Endothelial cell of umbilical vein (primary cell): ENCODE measurements at regions of chr10 and their contacts with region 1.

Region 1: DNA sequence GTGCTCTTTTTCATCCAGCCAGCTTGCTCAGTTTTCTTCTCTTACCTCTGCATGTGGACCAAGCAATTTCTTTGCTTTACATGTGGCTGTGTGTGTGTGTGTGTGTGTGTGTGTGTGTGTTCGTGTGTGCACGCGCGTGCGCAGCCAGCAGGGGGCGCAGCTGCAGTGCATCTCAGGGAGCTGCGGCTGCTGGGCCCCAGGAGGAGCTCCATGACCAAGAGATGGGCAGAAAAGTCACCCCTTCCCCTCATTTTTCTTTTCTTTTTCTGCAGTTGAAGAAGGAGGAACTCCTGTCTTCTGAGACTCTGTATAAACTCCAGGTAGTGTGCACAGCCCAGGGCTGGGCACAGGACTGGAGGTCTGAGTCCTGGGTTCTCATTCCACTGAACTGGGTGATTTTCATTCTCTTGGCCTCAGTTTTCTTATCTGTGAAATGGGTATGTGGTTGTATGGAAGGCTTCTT is 41.8 kb downstream of the BLNK start:
- DNase-seq: peak; percentile 49
- H3K4me3 ChIP-seq: no peak overlapping the region
- H3K27ac ChIP-seq: no peak overlapping the region
- H3K4me1 ChIP-seq: no peaks in the 10 kb centered on the region
- H3K27me3 ChIP-seq: no peaks in the 10 kb centered on the region
- CTCF ChIP-seq: peak; percentile 92
- POLR2A ChIP-seq: no peak

Region 2: GRCh38 chr10:96017191-96017687 is 212.4 kb before region 1 on chr10:
- CTCF ChIA-PET with region 1: interaction called, 64 read pairs
- POLR2A ChIA-PET with region 1: no interaction called
- dilution Hi-C with region 1: no loop called
- intact Hi-C with region 1: loop called (anchors 1 kb)
- DNase-seq: peak; percentile 87
- H3K4me3 ChIP-seq: no peak overlapping the region
- H3K27ac ChIP-seq: no peak overlapping the region
- H3K4me1 ChIP-seq: no peaks in the 10 kb centered on the region
- H3K27me3 ChIP-seq: peaks cover 0 to 8% of the 10 kb centered on the region in 2 experiments
- CTCF ChIP-seq: peak; percentile 65 to 71
- POLR2A ChIP-seq: no peak

Region 3: GRCh38 chr10:96263669-96264068 is 34.1 kb after region 1 on chr10:
- CTCF ChIA-PET with region 1: interaction called, 10 read pairs
- POLR2A ChIA-PET with region 1: no interaction called
- dilution Hi-C with region 1: no loop called
- intact Hi-C with region 1: no loop called
- DNase-seq: no peak
- H3K4me3 ChIP-seq: no peak overlapping the region
- H3K27ac ChIP-seq: no peak overlapping the region
- H3K4me1 ChIP-seq: no peaks in the 10 kb centered on the region
- H3K27me3 ChIP-seq: peaks cover 0 to 2% of the 10 kb centered on the region in 2 experiments
- CTCF ChIP-seq: no peak
- POLR2A ChIP-seq: no peak

Region 4: GRCh38 chr10:96292971-96293920 is 63.6 kb after region 1 on chr10:
- CTCF ChIA-PET with region 1: interaction called, 69 read pairs
- POLR2A ChIA-PET with region 1: no interaction called
- dilution Hi-C with region 1: no loop called
- intact Hi-C with region 1: loop called (anchors 1 kb)
- DNase-seq: peak; percentile 52
- H3K4me3 ChIP-seq: no peak overlapping the region
- H3K27ac ChIP-seq: no peak overlapping the region
- H3K4me1 ChIP-seq: no peaks in the 10 kb centered on the region
- H3K27me3 ChIP-seq: peaks cover 9 to 30% of the 10 kb centered on the region in 2 experiments
- CTCF ChIP-seq: peak; percentile 33 to 41
- POLR2A ChIP-seq: no peak

Region 5: DNA sequence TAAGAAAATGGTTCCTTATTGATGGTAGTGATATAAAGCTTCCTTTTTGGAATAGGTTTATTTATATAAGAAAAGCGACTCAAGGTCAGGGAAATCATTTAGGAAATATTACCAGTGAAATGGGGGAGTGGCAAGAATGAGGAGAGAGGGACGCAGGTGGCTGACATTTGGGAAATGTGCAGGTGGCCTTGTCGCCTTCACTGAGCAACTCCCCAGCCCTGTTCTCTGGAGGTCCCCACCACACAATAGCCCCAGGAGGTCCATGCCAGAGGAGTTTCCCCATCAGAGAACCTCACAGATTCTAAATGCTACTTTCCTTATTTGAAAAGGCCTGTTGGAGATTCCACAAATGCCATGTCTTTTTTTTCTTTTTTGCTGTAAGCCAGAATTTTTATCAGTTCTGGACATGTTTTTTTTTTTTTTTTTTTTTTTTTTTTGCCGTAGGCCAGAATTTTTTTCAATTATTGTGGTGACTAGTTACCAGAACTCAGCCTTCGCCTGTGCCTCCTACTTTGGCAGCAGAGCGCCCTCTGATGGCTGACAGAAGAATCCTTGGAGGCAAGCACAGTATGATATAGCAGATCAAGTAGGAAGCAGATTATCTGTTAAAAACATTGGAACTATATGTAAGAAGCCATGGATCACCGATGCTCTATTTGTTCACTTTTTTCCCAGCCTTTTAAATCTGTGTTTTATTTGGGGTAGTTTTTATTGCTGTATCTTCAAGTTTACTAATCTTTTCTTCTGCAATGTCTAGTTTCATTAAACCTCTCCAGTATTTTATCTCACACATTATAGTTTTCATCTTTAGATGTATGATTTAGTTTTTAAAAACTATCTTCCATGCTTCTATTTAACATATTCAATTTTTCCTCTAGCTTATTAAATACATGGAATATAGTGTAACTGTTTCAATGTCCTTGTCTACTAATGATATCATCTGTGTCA is 110.6 kb after region 1 on chr10:
- CTCF ChIA-PET with region 1: interaction called, 16 read pairs
- POLR2A ChIA-PET with region 1: no interaction called
- dilution Hi-C with region 1: no loop called
- intact Hi-C with region 1: loop called (anchors 1 kb)
- DNase-seq: peak; percentile 53
- H3K4me3 ChIP-seq: no peak overlapping the region
- H3K27ac ChIP-seq: no peak overlapping the region
- H3K4me1 ChIP-seq: no peaks in the 10 kb centered on the region
- H3K27me3 ChIP-seq: peaks cover 3 to 4% of the 10 kb centered on the region in 2 experiments
- CTCF ChIP-seq: peak; percentile 77 to 79
- POLR2A ChIP-seq: no peak